Activated CD8-positive, alpha-beta T cell treated with anti-CD3 and anti-CD28 coated beads, Interleukin-2, amount 10 ng/mL, durations not matched to agents 7 days and 5 days (primary cell): ENCODE measurements at regions of chr1 and their contacts with region 1.

Region 1: GRCh38 chr1:44696789-44697345 is 22.4 kb downstream of the ARMH1 start:
- DNase-seq: peak; percentile 71
- ATAC-seq: peak; percentile 94
- H3K4me3 Mint-ChIP-seq: peak overlapping the region; percentile 42
- H3K27ac Mint-ChIP-seq: peak overlapping the region; percentile 89
- H3K4me1 Mint-ChIP-seq: peaks cover 31% of the 10 kb centered on the region
- H3K27me3 Mint-ChIP-seq: no peaks in the 10 kb centered on the region

Region 2: DNA sequence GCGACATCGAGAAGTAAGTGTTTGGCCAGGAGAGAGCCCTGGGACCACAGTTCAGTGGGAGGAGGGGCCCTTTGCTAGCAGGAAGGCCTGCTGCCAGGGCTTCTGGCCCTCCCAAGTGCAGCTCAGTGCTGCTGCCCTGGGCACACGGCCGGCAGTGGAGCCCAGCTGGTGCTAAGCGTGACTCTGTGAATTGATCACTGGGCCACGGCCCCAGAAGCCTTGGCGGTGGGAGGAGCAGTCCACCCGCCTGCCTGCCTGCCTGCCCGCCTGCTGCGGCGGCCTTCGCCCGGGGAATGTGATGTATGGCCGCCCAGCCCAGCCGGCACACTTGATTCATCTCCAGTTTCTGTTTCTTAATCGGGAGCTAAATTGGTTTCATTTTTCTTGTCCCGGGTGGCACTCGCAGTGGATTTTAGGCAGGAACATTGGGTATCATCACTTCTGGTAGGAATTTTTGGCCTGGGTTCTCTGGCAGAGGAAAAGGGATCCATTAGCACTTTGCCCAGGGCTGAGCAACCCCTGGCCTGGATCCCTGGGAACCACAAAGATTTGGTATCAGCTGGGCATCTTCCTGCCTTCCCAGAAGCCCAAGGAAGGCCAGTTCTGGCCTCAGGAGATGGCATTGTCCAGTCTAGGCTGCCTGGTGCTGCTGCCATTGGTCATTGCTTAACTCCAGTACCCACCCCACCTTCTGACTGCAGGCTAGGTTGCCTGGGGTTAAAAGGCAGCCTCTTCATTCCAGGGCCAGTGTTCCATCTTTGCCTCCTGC is 51.2 kb before region 1 on chr1:
- CTCF ChIA-PET with region 1: no interaction called
- POLR2A ChIA-PET with region 1: no interaction called
- DNase-seq: no peak
- ATAC-seq: no peak
- H3K4me3 Mint-ChIP-seq: no peak overlapping the region
- H3K27ac Mint-ChIP-seq: no peak overlapping the region
- H3K4me1 Mint-ChIP-seq: no peaks in the 10 kb centered on the region
- H3K27me3 Mint-ChIP-seq: no peaks in the 10 kb centered on the region

Region 3: DNA sequence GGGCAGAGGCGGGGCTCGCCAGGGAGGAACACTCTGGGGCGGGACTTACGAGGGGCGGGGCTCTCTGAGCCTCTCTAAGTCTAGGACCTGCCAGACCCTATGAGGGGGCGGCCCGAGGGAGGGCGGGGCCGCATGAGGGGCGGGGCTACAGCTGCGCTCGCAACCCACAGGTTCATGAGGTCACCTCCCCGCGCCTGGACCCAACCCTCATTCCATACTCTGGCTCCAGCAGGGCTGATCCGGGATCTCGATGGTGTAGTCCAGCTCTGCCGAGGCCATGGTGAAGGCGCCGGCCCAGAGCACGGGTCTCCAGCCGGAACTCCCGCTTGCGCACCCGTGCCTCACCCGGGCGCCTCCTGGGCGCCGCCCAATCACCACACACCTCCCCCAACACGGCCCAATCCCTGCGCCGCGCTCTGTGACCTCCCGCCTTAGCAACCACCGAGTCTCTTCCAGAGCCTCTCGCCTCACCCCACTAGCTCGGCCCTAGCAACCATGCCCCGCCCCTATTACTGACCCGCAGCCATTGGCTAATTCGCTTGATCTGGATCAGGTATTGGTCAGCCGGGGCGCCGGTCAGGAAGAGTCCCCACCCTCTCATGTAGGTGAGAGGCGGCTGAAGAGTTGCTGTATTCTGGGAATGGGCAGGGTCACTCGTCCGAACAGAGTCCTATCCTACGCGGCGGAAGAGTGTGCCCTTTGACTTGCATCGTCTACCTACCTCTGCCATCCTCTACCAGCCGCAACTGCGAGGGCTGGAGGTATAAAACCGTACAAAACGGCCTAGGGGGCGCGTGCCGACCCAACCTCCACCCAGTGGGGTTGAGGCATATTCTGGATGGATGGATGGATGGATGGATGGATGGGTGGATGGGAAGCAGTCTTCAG is 22.5 kb before region 1 on chr1 and contains the starts of genes ARMH1 and TMEM53:
- CTCF ChIA-PET with region 1: interaction called, 10 read pairs
- POLR2A ChIA-PET with region 1: interaction called, 9 read pairs
- DNase-seq: peak; percentile 99
- ATAC-seq: peak; percentile 97
- H3K4me3 Mint-ChIP-seq: peak within 1 kb of the TSS; percentile 83
- H3K27ac Mint-ChIP-seq: peak within 1 kb of the TSS; percentile 87
- H3K4me1 Mint-ChIP-seq: peaks cover 28% of the 10 kb centered on the region
- H3K27me3 Mint-ChIP-seq: no peaks in the 10 kb centered on the region
- total RNA-seq, gene ARMH1: 80.0 to 88.4 TPM
- total RNA-seq, gene TMEM53: 4.0 to 4.6 TPM

Region 4: DNA sequence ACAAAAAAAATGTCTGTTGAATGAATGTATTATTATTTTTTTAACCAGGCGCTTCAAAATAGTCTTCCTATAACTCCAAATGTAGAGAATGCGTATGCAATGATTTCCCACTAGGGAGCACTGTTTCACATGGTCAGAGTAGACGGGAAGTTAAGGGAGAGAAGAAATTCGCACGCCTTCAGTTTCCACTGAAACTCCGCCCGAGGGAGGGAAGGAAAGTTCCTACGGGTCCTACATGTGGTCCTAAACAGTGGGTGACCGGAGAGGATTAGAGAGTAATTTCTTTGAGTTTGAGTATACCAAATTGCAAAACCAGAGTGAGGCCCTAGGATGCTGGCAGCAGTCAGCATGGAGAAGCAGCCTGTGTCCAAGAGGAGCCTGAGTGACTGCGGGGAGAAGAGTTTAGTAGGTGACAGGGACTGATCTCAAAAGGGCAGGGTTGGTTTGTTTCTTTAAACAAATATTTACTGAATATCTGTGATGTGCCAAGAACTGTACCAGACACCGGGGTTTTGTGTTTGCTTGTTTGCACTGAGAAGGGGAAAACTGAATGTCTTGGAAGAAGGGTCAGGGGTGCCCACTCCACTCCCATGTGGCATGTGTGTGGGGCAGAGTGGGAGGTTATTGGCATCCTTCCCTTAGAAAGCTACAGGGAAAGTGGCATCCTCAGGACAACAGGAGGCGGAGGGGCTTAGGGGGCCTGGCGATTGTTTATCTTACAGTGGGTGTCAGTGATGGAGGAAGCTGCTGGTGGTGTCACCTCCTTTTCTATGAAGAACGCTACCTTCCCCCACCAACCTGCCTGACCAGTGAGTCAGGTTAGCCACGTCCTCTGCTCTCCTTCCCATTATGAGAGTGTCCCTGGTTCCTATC is 11.3 kb after region 1 on chr1:
- CTCF ChIA-PET with region 1: interaction called, 14 read pairs
- POLR2A ChIA-PET with region 1: no interaction called
- DNase-seq: peak; percentile 60
- ATAC-seq: peak; percentile 89
- H3K4me3 Mint-ChIP-seq: peak overlapping the region; percentile 23
- H3K27ac Mint-ChIP-seq: peak overlapping the region; percentile 33
- H3K4me1 Mint-ChIP-seq: peaks cover 16% of the 10 kb centered on the region
- H3K27me3 Mint-ChIP-seq: peaks cover 5% of the 10 kb centered on the region

Region 5: DNA sequence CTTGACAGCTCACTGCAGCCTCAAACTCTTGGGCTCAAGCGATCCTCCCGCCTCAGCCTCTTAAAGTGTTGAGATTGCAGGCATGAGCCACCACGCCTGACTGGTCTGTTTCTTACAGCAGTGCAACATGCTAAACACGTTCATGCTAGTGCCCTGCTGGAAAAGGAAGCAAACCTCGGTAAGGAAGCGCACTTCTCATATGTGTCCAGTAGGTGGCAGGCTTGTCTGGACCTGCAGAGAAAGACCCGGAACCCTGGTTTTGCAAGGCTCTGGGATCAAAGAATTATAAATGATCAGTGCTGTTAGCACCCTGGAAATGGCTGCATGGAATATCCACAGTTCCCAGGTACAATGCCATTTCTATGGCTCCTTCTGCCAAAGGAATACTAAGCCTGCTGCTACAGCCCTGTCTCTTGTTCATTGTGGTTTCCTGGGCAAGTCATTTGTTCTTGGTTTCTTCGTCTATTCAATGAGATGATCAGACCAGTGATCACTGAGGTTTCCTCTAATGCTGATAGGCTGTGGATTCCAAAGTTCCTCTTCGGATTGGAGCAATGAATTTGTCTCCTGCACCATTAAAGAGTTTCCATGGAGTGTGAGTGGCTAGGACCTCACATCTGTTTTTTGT is 18.2 kb after region 1 on chr1:
- CTCF ChIA-PET with region 1: interaction called, 19 read pairs
- POLR2A ChIA-PET with region 1: no interaction called
- DNase-seq: peak; percentile 82
- ATAC-seq: peak; percentile 74
- H3K4me3 Mint-ChIP-seq: peak overlapping the region; percentile 40
- H3K27ac Mint-ChIP-seq: peak overlapping the region; percentile 76
- H3K4me1 Mint-ChIP-seq: peaks cover 48% of the 10 kb centered on the region
- H3K27me3 Mint-ChIP-seq: peaks cover 5% of the 10 kb centered on the region

Region 6: GRCh38 chr1:45473302-45473701 is 776.4 kb after region 1 on chr1:
- CTCF ChIA-PET with region 1: no interaction called
- POLR2A ChIA-PET with region 1: no interaction called
- DNase-seq: no peak
- ATAC-seq: no peak
- H3K4me3 Mint-ChIP-seq: no peak overlapping the region
- H3K27ac Mint-ChIP-seq: no peak overlapping the region
- H3K4me1 Mint-ChIP-seq: no peaks in the 10 kb centered on the region
- H3K27me3 Mint-ChIP-seq: no peaks in the 10 kb centered on the region